ENCODE measurements at regions of chr1 and their contacts with region 1.

Region 1: DNA sequence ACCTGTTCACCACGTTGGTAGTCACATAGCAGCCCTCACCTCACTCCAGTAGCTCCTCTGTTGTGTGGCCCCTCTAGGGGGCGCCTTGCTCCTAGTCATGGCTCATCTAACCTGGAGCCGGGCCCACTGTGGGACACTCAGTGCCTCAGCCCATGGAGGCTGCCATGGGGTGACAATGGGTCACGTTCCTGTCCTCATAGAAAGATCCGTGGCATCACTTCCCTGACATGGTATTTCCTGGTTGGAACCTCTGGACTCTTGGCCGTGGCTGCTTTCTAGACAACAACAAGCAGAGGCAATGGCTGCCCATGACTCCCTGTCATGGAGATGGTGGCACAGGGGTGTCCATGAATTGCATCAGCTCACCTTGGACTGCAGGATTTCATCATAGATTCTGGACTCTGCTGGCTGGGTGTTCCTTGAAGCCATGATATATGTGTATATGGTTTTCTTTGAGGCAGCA is 27.5 kb upstream of the SLAMF6 start:
- DNase-seq: peak; percentile 17 to 81
- H3K4me3 ChIP-seq: no peak overlapping the region
- H3K27ac ChIP-seq: no peak overlapping the region
- H3K4me1 ChIP-seq: no peaks in the 10 kb centered on the region
- H3K27me3 ChIP-seq: no peaks in the 10 kb centered on the region
- CTCF ChIP-seq: peak; percentile 66 to 77 (median 75)
- EP300 ChIP-seq: no peak
- POLR2A ChIP-seq: no peak
- RAD21 ChIP-seq: peak; percentile 62 to 76

Region 2: DNA sequence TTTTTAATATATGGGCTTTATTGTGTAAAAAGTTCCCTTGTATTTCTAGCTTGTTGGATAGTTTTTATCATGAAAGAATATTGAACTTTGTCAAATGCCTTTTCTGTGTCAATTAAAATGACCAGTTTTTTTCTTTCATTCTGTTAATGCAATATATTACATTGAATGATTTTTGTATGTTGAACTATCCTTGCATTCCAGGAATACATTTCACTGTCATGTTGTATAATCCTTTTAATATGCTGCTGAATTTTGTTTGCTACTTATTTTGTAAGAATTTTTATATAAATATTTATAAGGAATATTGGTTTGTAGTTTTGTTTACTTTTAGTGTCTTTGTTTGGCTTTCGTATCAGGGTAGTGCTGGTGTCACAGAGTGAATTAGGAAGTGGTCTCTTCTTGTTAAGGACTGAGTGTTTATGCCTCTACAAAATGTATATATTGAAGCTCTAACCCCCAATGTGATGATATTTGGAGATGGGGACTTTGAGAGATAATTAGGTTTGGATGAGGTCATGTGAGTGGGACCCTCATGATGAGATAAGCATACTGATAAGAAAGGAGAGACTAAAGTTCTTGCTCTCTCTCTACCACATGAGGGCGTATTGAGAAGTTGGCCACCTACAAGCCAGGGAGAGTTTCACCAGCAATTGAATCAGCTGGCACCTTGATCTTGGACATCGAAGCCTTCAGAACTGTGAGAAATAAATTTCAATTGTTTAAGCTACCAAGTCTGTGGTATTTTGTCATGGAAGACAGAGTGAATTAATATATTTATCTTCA is 15.6 kb before region 1 on chr1:
- CTCF ChIA-PET with region 1: interaction called, 13 read pairs
- POLR2A ChIA-PET with region 1: no interaction called
- DNase-seq: no peak
- H3K4me3 ChIP-seq: no peak overlapping the region
- H3K27ac ChIP-seq: no peak overlapping the region
- H3K4me1 ChIP-seq: no peaks in the 10 kb centered on the region
- H3K27me3 ChIP-seq: no peaks in the 10 kb centered on the region
- CTCF ChIP-seq: peak in 2 of 3 experiments; percentile 34 to 68; a peak in 2 of 4 replicates
- EP300 ChIP-seq: no peak
- POLR2A ChIP-seq: no peak
- RAD21 ChIP-seq: peak; percentile 44 to 54

Region 3: GRCh38 chr1:160618763-160619274 is 68.2 kb after region 1 on chr1:
- CTCF ChIA-PET with region 1: interaction called, 10 read pairs
- POLR2A ChIA-PET with region 1: no interaction called
- DNase-seq: no peak
- H3K4me3 ChIP-seq: no peak overlapping the region
- H3K27ac ChIP-seq: no peak overlapping the region
- H3K4me1 ChIP-seq: no peaks in the 10 kb centered on the region; a peak in 1 of 7 replicates
- H3K27me3 ChIP-seq: no peaks in the 10 kb centered on the region
- CTCF ChIP-seq: peak in 2 of 3 experiments; percentile 39 to 69; a peak in 3 of 4 replicates
- EP300 ChIP-seq: no peak
- POLR2A ChIP-seq: no peak
- RAD21 ChIP-seq: peak in 1 of 2 experiments; percentile 40; a peak in 1 of 4 replicates

Measured in H1 (cell line).